Naive thymus-derived CD4-positive, alpha-beta T cell (primary cell): ENCODE measurements at regions of chr5 and their contacts with region 1.

Region 1: GRCh38 chr5:95781101-95781583 is 41.4 kb downstream of the GLRX start:
- DNase-seq: peak; percentile 38 to 77 (median 71)
- ATAC-seq: peak; percentile 93
- H3K4me3 ChIP-seq: peak overlapping the region; percentile 45
- H3K4me3 Mint-ChIP-seq: peak overlapping the region in 9 of 10 donors; percentile 52 to 85 (median 84)
- H3K27ac ChIP-seq: peak overlapping the region; percentile 39
- H3K27ac Mint-ChIP-seq: peak overlapping the region in 8 of 9 donors; percentile 48 to 84 (median 62)
- H3K4me1 ChIP-seq: no peaks in the 10 kb centered on the region
- H3K4me1 Mint-ChIP-seq: peaks cover 0 to 21% (median 19%) of the 10 kb centered on the region in 7 donors
- H3K27me3 ChIP-seq: no peaks in the 10 kb centered on the region
- H3K27me3 Mint-ChIP-seq: peaks cover 0 to 8% (median 0%) of the 10 kb centered on the region in 5 donors

Region 2: DNA sequence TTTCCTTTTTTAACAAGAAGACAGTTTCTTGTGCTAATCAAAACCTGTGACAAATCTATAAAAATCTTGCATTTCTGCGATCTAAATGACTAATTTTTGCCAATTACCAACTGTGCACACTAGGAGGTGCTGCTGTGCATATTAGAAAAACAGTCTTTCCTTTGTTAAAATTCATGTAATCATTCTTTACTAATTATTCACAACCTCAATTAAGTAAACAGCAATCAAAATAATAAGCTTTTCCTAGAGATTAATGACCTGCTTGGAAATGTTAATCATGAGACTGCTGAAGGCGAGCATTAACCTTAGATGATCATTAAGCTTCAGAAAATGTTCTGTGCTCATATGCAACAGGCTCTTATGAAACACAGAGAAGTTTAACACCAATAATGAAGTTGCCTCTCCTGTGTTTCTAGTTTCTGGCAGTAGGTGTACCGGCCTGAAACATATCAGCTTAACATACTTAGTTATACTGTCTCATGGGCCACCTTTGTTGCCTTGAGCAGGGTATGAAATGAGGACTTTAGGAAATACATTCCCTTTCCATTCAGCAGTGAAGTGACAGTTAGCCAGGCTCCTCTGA is 116.8 kb before region 1 on chr5:
- CTCF ChIA-PET with region 1: interaction called, 15 read pairs
- POLR2A ChIA-PET with region 1: no interaction called
- intact Hi-C with region 1: loop called (anchors 1 kb)
- DNase-seq: peak in 5 of 9 donors; percentile 31 to 49 (median 41)
- ATAC-seq: peak; percentile 65
- H3K4me3 ChIP-seq: no peak overlapping the region
- H3K4me3 Mint-ChIP-seq: no peak overlapping the region
- H3K27ac ChIP-seq: no peak overlapping the region
- H3K27ac Mint-ChIP-seq: no peak overlapping the region
- H3K4me1 ChIP-seq: peaks cover 0 to 5% of the 10 kb centered on the region in 2 donors
- H3K4me1 Mint-ChIP-seq: peaks cover 0 to 8% (median 3%) of the 10 kb centered on the region in 7 donors
- H3K27me3 ChIP-seq: no peaks in the 10 kb centered on the region
- H3K27me3 Mint-ChIP-seq: peaks cover 0 to 8% (median 0%) of the 10 kb centered on the region in 5 donors

Region 3: GRCh38 chr5:95712347-95712958 is 68.7 kb before region 1 on chr5:
- CTCF ChIA-PET with region 1: no interaction called
- POLR2A ChIA-PET with region 1: no interaction called
- intact Hi-C with region 1: no loop called
- DNase-seq: no peak
- ATAC-seq: no peak
- H3K4me3 ChIP-seq: no peak overlapping the region
- H3K4me3 Mint-ChIP-seq: no peak overlapping the region
- H3K27ac ChIP-seq: no peak overlapping the region
- H3K27ac Mint-ChIP-seq: peak overlapping the region in 1 of 9 donors; percentile 10
- H3K4me1 ChIP-seq: peaks cover 0 to 6% of the 10 kb centered on the region in 2 donors
- H3K4me1 Mint-ChIP-seq: peaks cover 0 to 19% (median 6%) of the 10 kb centered on the region in 7 donors
- H3K27me3 ChIP-seq: no peaks in the 10 kb centered on the region
- H3K27me3 Mint-ChIP-seq: peaks cover 0 to 33% (median 0%) of the 10 kb centered on the region in 5 donors

Region 4: GRCh38 chr5:95794070-95794516 is 13.0 kb after region 1 on chr5:
- CTCF ChIA-PET with region 1: interaction called, 12 read pairs
- POLR2A ChIA-PET with region 1: interaction called, 3 read pairs
- intact Hi-C with region 1: no loop called
- DNase-seq: no peak
- ATAC-seq: no peak
- H3K4me3 ChIP-seq: no peak overlapping the region
- H3K4me3 Mint-ChIP-seq: no peak overlapping the region
- H3K27ac ChIP-seq: no peak overlapping the region
- H3K27ac Mint-ChIP-seq: no peak overlapping the region
- H3K4me1 ChIP-seq: no peaks in the 10 kb centered on the region
- H3K4me1 Mint-ChIP-seq: peaks cover 0 to 5% (median 2%) of the 10 kb centered on the region in 7 donors
- H3K27me3 ChIP-seq: no peaks in the 10 kb centered on the region
- H3K27me3 Mint-ChIP-seq: peaks cover 0 to 20% (median 0%) of the 10 kb centered on the region in 5 donors

Region 5: DNA sequence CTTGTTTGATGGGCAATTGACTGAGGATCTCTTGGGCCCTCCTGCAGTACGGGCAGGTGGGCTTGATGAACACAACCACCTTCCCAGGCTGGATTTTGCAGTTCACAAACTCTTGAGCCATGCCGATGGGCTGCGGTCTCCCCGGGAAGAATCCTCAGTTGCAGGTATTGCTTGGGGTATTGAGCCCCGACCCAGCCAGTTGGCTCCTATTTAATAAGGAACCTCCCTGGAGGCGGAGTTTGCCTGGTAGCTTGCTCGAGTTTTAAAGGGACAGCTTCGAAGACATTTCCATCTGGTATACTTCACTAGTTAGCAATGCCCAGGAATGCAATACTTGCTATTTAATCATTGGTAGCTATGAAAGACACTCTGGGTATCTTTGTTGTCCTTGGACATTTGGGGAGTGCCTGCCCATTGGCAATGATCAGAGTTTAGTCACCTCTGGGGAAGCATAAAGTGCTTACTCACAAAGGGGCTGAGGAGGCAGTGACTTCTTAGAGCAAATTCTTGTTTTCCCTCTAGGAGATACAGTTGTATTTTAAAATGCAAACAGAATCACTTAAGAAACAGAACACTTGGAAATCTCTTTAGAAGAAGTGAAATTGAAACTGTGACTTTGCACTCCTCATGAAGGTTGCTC is 41.5 kb after region 1 on chr5 and contains the start of gene GLRX:
- CTCF ChIA-PET with region 1: interaction called, 59 read pairs
- POLR2A ChIA-PET with region 1: interaction called, 10 read pairs
- intact Hi-C with region 1: loop called in 1 of 2 experiments (anchors 1 kb)
- DNase-seq: peak in 8 of 9 donors; percentile 48 to 62 (median 58)
- ATAC-seq: peak; percentile 52
- H3K4me3 ChIP-seq: peak within 1 kb of the TSS; percentile 93
- H3K4me3 Mint-ChIP-seq: peak within 1 kb of the TSS; percentile 91 to 100 (median 99)
- H3K27ac ChIP-seq: peak within 1 kb of the TSS; percentile 84
- H3K27ac Mint-ChIP-seq: peak within 1 kb of the TSS; percentile 91 to 97 (median 95)
- H3K4me1 ChIP-seq: peaks cover 38% of the 10 kb centered on the region in 2 donors
- H3K4me1 Mint-ChIP-seq: peaks cover 53 to 78% (median 61%) of the 10 kb centered on the region in 7 donors
- H3K27me3 ChIP-seq: no peaks in the 10 kb centered on the region
- H3K27me3 Mint-ChIP-seq: no peaks in the 10 kb centered on the region
- total RNA-seq, gene GLRX: 26.3 to 89.5 (median 55.6) TPM

Region 6: GRCh38 chr5:95853490-95853889 is 72.3 kb after region 1 on chr5:
- CTCF ChIA-PET with region 1: interaction called, 357 read pairs
- POLR2A ChIA-PET with region 1: interaction called, 5 read pairs
- intact Hi-C with region 1: no loop called
- DNase-seq: no peak
- ATAC-seq: no peak
- H3K4me3 ChIP-seq: no peak overlapping the region
- H3K4me3 Mint-ChIP-seq: no peak overlapping the region
- H3K27ac ChIP-seq: no peak overlapping the region
- H3K27ac Mint-ChIP-seq: no peak overlapping the region
- H3K4me1 ChIP-seq: no peaks in the 10 kb centered on the region
- H3K4me1 Mint-ChIP-seq: peaks cover 0 to 8% (median 0%) of the 10 kb centered on the region in 7 donors
- H3K27me3 ChIP-seq: no peaks in the 10 kb centered on the region
- H3K27me3 Mint-ChIP-seq: peaks cover 0 to 9% (median 0%) of the 10 kb centered on the region in 5 donors

Region 7: GRCh38 chr5:96079075-96079474 is 297.9 kb after region 1 on chr5:
- CTCF ChIA-PET with region 1: no interaction called
- POLR2A ChIA-PET with region 1: no interaction called
- intact Hi-C with region 1: no loop called
- DNase-seq: no peak
- ATAC-seq: no peak
- H3K4me3 ChIP-seq: no peak overlapping the region
- H3K4me3 Mint-ChIP-seq: no peak overlapping the region
- H3K27ac ChIP-seq: no peak overlapping the region
- H3K27ac Mint-ChIP-seq: no peak overlapping the region
- H3K4me1 ChIP-seq: no peaks in the 10 kb centered on the region
- H3K4me1 Mint-ChIP-seq: peaks cover 0 to 23% (median 0%) of the 10 kb centered on the region in 7 donors
- H3K27me3 ChIP-seq: no peaks in the 10 kb centered on the region
- H3K27me3 Mint-ChIP-seq: peaks cover 0 to 23% (median 18%) of the 10 kb centered on the region in 5 donors

Region 8: GRCh38 chr5:96196890-96197289 is 415.7 kb after region 1 on chr5:
- CTCF ChIA-PET with region 1: no interaction called
- POLR2A ChIA-PET with region 1: no interaction called
- intact Hi-C with region 1: no loop called
- DNase-seq: no peak
- ATAC-seq: no peak
- H3K4me3 ChIP-seq: no peak overlapping the region
- H3K4me3 Mint-ChIP-seq: no peak overlapping the region
- H3K27ac ChIP-seq: no peak overlapping the region
- H3K27ac Mint-ChIP-seq: no peak overlapping the region
- H3K4me1 ChIP-seq: no peaks in the 10 kb centered on the region
- H3K4me1 Mint-ChIP-seq: no peaks in the 10 kb centered on the region
- H3K27me3 ChIP-seq: no peaks in the 10 kb centered on the region
- H3K27me3 Mint-ChIP-seq: peaks cover 2 to 28% (median 15%) of the 10 kb centered on the region in 5 donors

Region 9: DNA sequence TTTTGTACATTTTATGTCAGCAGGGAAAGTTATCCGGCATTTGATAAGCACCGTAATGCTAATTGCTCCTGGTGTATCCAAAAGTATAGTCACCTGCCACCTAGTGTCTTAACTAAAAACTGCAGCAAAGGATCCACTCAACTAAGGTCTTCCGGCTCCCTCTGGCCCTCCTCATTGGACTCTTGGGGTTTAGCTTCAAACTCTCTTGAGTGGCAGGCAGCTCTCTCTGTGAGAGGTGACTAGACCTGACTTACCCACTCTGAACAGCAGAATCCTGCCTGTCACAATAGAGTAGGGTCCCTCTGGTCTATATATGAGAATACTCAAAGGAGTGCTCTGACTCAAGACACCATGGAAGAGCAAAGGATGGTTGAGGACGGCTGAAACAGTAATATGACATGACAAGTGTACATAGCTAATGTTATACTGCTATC is 820.7 kb after region 1 on chr5:
- CTCF ChIA-PET with region 1: no interaction called
- POLR2A ChIA-PET with region 1: no interaction called
- intact Hi-C with region 1: loop called in 1 of 2 experiments (anchors 10 kb)
- DNase-seq: peak in 7 of 9 donors; percentile 36 to 68 (median 65)
- ATAC-seq: peak; percentile 87
- H3K4me3 ChIP-seq: no peak overlapping the region
- H3K4me3 Mint-ChIP-seq: peak overlapping the region in 1 of 10 donors; percentile 2
- H3K27ac ChIP-seq: no peak overlapping the region
- H3K27ac Mint-ChIP-seq: no peak overlapping the region
- H3K4me1 ChIP-seq: no peaks in the 10 kb centered on the region
- H3K4me1 Mint-ChIP-seq: peaks cover 0 to 3% (median 0%) of the 10 kb centered on the region in 7 donors
- H3K27me3 ChIP-seq: no peaks in the 10 kb centered on the region
- H3K27me3 Mint-ChIP-seq: peaks cover 4 to 16% (median 4%) of the 10 kb centered on the region in 5 donors